ENCODE measurements at regions of chr6 and their contacts with region 1.

Region 1: DNA sequence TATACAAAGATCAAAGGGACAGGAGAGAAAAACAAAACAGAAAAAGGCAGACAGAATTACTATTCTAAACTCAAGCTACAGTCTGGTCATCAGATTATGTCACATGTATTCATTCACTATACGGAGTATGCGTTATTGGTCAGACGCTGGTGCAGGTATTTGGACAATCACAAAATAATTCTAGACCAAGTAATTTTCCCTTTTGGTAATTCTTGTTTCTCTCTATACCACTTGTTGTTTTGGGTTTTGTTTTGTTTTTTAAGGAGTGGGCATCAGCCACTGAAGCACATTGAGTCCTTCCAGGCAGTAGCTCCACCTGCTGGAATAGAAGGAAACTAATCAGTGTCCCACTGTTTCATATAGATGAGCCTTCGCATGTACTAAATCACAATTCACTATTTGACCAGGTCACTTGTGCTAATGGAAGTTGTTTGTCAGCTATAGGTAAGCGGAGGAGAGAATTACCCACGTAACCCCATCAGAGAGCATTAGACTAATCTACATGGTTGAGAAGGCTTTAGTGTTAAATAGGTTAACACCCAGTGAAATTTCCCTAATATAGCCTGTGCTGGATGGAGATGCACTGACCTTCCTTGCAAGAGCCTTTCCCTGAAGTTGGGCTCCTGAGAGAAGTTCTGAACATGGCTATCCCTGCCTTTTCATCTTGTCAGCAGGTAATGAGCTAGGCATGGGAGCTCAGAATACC is 77.9 kb downstream of the TNFAIP3 start:
- DNase-seq: no peak
- H3K4me3 ChIP-seq: no peak overlapping the region
- H3K27me3 ChIP-seq: no peaks in the 10 kb centered on the region
- CTCF ChIP-seq: peak; percentile 80

Region 2: GRCh38 chr6:137697267-137697938 is 247.5 kb before region 1 on chr6:
- CTCF ChIA-PET with region 1: interaction called, 23 read pairs
- POLR2A ChIA-PET with region 1: interaction called, 8 read pairs
- DNase-seq: no peak
- H3K4me3 ChIP-seq: no peak overlapping the region
- H3K27me3 ChIP-seq: no peaks in the 10 kb centered on the region
- CTCF ChIP-seq: peak; percentile 6; the same call in 1 of the 2 replicates

Region 3: GRCh38 chr6:137707590-137708360 is 237.2 kb before region 1 on chr6:
- CTCF ChIA-PET with region 1: interaction called, 37 read pairs
- POLR2A ChIA-PET with region 1: no interaction called
- DNase-seq: no peak
- H3K4me3 ChIP-seq: no peak overlapping the region
- H3K27me3 ChIP-seq: no peaks in the 10 kb centered on the region
- CTCF ChIP-seq: peak; percentile 71

Region 4: DNA sequence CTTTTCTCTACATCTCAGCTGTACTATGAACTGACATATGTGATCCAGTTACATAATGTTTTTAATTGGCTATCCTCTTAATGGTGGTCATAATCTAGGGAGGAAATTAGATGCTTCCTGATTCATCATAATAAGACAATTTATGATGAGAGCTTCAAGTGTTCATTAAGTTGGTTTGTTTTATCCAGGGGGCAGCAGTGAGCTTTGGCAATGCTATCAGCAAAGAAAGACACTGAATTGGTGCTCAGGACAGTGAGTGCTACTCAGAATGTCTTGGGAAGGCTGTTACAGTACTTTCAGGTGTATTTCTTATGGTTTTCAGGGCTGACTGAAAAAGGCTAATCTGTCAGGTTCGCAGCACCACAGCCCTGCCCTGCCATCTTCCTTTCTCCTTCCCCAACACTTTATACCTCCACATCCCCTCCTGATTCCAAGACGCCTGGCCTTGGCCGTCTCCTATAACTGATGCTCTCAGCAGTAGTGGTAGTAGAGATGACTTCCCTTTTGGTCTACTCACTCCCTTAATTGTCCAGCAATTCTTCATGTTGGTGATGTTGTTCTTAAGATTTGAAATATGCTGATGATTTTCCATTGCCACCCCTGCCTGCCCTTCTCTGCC is 144.9 kb before region 1 on chr6:
- CTCF ChIA-PET with region 1: interaction called, 16 read pairs
- POLR2A ChIA-PET with region 1: no interaction called
- DNase-seq: no peak
- H3K4me3 ChIP-seq: no peak overlapping the region
- H3K27me3 ChIP-seq: no peaks in the 10 kb centered on the region
- CTCF ChIP-seq: peak; percentile 58

Region 5: DNA sequence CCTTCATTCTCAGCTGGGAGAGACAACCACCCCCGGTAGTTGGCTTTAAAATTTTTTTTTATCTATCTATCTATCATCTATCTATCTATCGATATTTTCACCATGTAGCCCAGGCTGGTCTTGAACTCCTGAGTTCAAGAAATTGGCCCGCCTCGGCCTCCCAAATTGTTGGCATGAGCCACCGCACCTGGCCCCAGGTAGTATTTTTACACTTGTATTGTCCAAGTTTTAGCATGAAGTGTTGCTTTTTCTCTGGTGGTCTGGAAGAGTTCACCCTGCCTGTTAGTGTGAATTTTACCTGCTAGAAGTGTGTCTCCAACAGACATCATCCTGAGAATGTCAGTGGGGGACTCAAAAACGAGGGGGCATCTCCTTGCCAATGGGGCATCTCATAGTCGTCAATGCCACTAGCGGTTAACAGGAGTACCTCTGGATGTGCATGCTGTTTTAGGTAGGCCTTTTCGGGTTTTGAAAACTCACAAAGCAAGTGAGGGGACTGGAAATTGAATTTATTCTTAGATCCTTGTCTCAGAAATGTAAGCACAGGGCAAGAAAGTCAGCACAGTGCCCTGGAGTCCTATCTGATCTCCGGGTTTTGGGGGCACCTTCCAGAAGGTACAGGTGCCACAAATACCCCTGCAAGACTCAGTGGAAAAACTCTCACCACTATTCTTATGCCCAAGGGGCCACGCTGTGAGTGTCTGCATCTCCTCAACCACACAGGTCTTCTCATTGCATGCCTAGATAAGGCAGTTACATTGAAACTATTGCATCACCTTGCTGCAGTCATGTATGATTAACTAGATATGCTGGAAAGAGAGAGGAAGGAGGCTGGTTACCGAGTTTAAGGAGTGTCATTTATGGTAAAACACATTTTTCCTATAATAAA is 40.8 kb before region 1 on chr6:
- CTCF ChIA-PET with region 1: no interaction called
- POLR2A ChIA-PET with region 1: no interaction called
- DNase-seq: no peak
- H3K4me3 ChIP-seq: no peak overlapping the region
- H3K27me3 ChIP-seq: no peaks in the 10 kb centered on the region
- CTCF ChIP-seq: no peak

Region 6: GRCh38 chr6:137927777-137928218 is 17.1 kb before region 1 on chr6:
- CTCF ChIA-PET with region 1: interaction called, 17 read pairs
- POLR2A ChIA-PET with region 1: no interaction called
- DNase-seq: no peak
- H3K4me3 ChIP-seq: no peak overlapping the region
- H3K27me3 ChIP-seq: no peaks in the 10 kb centered on the region
- CTCF ChIP-seq: no peak

Region 7: DNA sequence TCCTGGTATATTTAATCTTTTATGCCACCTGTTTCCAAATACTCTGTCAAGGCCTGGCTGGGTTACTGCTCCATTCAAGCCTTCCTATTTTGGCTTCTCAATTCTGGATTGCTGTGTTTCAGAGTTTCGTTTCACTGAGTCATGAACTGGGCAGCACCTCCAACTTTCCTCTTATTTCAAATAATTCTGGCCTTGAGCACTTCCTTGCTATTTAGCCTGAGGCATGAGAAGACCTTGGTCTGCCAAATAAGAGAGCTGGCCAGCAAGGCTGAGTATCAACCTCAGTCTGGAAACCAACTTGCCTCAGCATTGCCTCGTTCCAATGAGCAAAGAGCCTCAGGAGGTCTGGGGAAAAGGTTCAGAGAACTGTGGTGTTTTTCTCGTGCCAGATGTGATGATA is 11.2 kb before region 1 on chr6:
- CTCF ChIA-PET with region 1: interaction called, 13 read pairs
- POLR2A ChIA-PET with region 1: no interaction called
- DNase-seq: peak; percentile 73
- H3K4me3 ChIP-seq: no peak overlapping the region
- H3K27me3 ChIP-seq: no peaks in the 10 kb centered on the region
- CTCF ChIP-seq: no peak

Region 8: GRCh38 chr6:137958811-137959565 is 14.0 kb after region 1 on chr6:
- CTCF ChIA-PET with region 1: interaction called, 20 read pairs
- POLR2A ChIA-PET with region 1: no interaction called
- DNase-seq: no peak
- H3K4me3 ChIP-seq: no peak overlapping the region
- H3K27me3 ChIP-seq: no peaks in the 10 kb centered on the region
- CTCF ChIP-seq: no peak

Measured in BJ (cell line).